ENCODE measurements at regions of chr1 and their contacts with region 1.

Region 1: DNA sequence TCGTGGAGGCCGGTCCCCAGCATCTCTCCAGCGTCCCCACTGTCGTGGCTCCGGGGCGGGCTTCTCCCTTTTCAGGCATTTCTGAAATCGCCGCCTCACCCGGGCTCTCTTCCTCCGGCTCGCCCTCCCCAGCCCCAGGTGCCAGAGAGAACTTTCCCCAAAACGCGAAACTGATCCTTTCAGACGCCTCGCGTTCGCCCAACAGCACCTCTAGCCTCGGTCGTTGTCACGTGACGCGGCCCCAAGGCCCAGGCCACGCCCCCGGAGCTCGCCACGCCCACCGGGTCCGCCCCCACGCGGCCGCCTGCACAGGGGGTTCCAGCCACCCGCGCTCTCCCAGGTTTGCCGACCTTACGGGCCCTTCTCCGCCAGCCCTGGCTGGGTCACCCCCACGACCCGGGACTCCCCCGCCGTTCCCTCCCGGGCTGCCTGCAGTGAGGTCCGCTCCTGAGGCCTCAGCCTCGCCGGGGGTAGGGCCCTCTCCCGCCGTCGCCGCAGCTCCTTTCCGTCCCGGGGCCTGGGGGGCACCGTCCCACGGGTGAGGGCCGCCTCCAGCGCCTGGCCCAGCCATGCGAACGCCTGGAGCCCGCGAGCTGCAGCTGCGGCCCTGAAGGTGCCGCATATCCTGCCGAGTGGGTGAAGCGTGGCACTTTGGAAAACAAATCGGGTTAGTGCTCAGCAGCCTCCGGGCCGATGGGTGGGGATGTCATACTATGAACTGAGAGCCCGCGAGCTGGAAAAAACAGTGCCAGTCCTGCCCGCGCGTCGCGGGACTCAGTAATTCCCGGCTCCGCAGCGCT is 21.0 kb downstream of the H3-3A start:
- DNase-seq: peak; percentile 80 to 87 (median 87)
- H3K4me3 ChIP-seq: peak overlapping the region; percentile 38 to 80 (median 72)
- H3K27ac ChIP-seq: no peak overlapping the region
- H3K4me1 ChIP-seq: peaks cover 0 to 14% (median 12%) of the 10 kb centered on the region in 4 experiments
- H3K27me3 ChIP-seq: no peaks in the 10 kb centered on the region

Region 2: GRCh38 chr1:226109829-226110248 is 26.3 kb after region 1 on chr1:
- CTCF ChIA-PET with region 1: interaction called, 12 read pairs
- POLR2A ChIA-PET with region 1: interaction called, 3 read pairs
- DNase-seq: peak; percentile 85 to 94 (median 92)
- H3K4me3 ChIP-seq: peak overlapping the region; percentile 65 to 87 (median 69)
- H3K27ac ChIP-seq: peak overlapping the region; percentile 54 to 81
- H3K4me1 ChIP-seq: peaks cover 2 to 24% (median 20%) of the 10 kb centered on the region in 4 experiments
- H3K27me3 ChIP-seq: no peaks in the 10 kb centered on the region

Measured in common myeloid progenitor, CD34-positive (primary cell).